Left cardiac atrium (tissue), 4 donors: ENCODE measurements at regions of chr12 and their contacts with region 1.

Region 1: DNA sequence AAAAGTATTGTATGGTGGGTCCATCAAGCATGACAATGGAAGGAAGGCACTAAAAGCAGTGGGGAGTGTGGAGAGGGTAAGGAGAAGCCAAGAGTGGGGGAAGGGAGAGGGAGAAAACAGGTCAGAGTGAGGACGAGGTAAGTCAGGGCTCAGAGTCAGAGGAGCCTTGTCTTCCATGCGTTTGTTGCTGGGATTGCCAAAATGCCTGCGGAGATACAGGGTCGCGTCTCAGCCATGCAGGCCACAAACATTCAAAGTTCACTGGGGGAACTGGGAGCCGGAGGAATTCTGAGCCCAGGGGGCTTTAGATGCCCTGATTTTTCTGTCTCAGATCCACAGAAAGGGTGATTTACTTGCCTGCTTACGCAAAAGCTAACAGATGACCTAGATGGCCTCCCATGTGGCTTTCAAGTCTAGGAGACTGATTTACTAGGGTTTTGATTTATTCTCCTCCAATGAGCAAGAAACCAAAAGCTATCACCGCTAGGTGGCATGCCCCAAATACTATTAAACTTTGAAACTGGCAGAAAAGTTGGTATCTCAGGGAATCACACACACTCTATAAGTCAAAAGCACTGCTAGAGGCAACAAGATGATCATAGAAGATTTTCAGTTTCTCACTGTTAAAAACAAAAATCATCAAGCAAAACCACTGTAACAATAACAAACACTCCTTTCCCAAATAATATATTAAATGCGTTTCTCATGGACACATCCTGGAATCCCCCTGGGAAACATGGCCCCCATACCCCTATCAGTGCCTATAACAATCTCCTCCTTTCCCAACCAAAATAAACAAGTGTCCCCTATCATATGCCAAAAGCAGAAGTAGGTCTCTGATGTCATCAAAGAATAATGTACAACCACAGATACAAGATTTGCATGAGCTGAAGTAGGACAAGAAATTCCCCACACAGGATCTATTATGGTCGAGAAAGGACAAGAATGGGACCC is 26.6 kb upstream of the MDM1 start:
- DNase-seq: peak; percentile 48
- ATAC-seq: peak; percentile 75 to 87

Region 2: DNA sequence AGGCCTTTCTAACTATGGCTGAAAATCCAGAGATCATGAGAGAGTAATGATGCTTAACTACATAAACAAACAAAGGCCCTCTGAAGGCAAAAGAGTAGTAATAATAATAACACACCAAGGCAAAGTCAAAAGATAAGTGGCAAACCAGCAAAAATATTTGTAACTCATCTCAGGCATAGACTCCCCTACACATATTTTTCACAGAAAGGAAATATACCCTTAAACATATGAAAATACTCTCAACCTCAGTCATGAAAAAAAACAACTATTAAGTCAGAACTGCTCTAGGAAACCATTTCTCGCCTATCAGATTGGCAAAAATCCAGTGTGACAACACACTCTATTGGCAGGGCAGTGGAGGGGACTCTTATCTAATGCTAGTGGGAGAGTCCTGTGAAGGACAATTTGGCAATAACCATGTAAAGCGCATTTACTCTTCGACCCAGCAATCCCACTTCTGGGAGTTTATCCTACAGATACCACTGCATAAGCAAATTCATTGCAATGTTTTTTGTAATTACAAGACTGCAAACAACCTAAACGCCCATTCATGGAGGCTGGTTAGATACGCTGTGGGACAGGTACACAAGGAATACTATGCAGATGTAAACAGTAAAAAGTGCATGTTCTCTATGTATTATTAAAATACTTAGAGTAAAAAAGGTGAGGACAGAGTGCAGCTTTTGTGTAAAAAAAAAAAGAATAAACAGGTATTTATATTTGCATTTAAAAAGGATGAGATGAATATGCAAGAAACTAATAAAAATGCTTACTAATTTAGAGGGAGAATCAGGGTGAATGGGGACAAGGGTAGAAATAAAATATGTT is 79.4 kb before region 1 on chr12:
- intact Hi-C with region 1: no loop called
- DNase-seq: no peak
- ATAC-seq: no peak

Region 3: GRCh38 chr12:68610370-68611093 is 251.7 kb after region 1 on chr12 and contains the start of gene RAP1B:
- intact Hi-C with region 1: loop called (anchors 10 kb)
- DNase-seq: peak; percentile 92
- ATAC-seq: peak; percentile 96 to 97
- total RNA-seq, gene RAP1B: 82.2 to 91.3 TPM

Region 4: GRCh38 chr12:68686595-68687521 is 328.0 kb after region 1 on chr12 and contains the start of gene NUP107:
- intact Hi-C with region 1: loop called in 1 of 2 experiments (anchors 10 kb)
- DNase-seq: peak; percentile 100
- ATAC-seq: peak; percentile 98 to 99
- total RNA-seq, gene NUP107: 23.5 to 31.6 TPM